Endothelial cell of umbilical vein (primary cell): ENCODE measurements at regions of chr3 and their contacts with region 1.

Region 1: DNA sequence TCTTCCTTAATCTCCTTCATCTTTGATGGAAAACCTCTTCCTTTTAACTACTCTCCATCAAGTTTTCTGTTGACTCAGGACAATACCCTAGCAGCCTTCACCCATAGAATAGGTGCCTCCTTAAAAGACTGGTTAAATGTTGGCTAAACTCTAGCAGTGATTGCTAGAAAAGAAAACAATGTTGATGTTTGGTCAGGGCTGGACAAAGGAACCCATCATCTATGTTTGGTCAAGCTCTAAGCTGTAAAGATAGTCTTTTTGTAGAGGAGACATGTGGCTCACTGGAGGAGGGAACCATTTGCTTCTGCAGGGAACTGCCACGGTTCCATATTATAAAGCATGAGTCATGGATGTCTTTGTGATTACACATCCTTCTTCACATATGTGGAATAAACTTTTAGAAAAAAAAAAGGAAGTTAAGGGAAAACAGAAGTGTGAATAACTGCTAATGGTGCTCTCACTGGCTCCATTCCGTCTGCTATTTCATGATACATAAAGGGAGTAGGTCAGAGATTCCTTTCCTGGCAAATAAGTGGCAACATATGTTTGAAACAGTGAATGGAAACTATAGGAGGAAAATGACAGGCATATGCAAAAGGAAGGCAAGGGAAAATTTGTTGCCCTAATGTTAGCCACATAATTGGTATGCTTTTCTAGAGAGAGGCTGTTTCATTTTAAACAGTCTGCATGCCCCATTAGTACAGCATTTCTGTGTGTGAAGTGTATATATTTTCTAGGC is 78.2 kb downstream of the CMSS1 start:
- DNase-seq: peak; percentile 85
- H3K4me3 ChIP-seq: peak overlapping the region in 1 of 3 experiments; percentile 9
- H3K27ac ChIP-seq: peak overlapping the region; percentile 92
- H3K4me1 ChIP-seq: peaks cover 22% of the 10 kb centered on the region
- H3K27me3 ChIP-seq: no peaks in the 10 kb centered on the region
- CTCF ChIP-seq: no peak
- POLR2A ChIP-seq: no peak

Region 2: GRCh38 chr3:99884484-99884883 is 11.4 kb before region 1 on chr3:
- CTCF ChIA-PET with region 1: interaction called, 10 read pairs
- POLR2A ChIA-PET with region 1: interaction called, 3 read pairs
- dilution Hi-C with region 1: no loop called
- intact Hi-C with region 1: no loop called
- DNase-seq: peak; percentile 58
- H3K4me3 ChIP-seq: peak overlapping the region in 1 of 3 experiments; percentile 27
- H3K27ac ChIP-seq: peak overlapping the region; percentile 49
- H3K4me1 ChIP-seq: peaks cover 33% of the 10 kb centered on the region
- H3K27me3 ChIP-seq: no peaks in the 10 kb centered on the region
- CTCF ChIP-seq: no peak
- POLR2A ChIP-seq: no peak